CD8-positive, alpha-beta T cell (primary cell): ENCODE measurements at regions of chr6 and their contacts with region 1.

Region 1: DNA sequence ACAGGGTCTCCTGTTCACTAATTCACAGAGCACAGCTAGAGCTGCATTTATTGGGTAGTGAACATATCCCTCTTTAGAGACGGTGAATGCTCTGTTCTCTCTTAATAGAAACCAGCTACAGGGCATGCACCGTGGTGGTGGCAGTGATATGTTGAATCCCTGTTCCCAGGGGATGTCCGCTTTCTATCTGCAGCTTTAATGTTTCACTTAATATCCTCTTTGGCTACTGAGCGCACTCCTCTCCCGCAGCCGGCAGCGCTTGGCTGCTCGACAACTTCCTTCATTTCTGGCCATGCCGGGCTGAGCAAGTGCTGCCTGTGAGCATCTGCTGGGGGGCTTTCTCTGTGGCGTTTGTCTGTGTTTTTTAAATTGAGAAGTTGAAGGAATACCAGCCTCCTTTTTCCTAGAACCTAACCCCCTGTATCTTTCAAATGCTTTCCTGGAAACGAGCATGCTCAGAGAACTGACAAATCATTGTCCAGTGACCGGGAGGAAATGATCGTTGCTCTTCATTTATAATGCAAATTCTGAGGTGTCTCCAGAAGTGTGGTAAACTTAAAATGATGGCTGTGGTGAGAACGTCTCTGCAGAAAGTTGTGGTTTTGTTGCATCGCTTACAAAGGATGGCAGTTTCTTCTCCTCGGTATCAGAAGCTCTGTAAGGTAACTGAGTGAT is 297.9 kb downstream of the UTRN start:
- DNase-seq: peak in 8 of 9 experiments; percentile 7 to 76 (median 32)
- ATAC-seq: peak; percentile 86
- H3K4me3 ChIP-seq: peak overlapping the region; percentile 31 to 42
- H3K4me3 Mint-ChIP-seq: peak overlapping the region; percentile 86
- H3K27ac ChIP-seq: peak overlapping the region; percentile 14 to 47
- H3K27ac Mint-ChIP-seq: peak overlapping the region; percentile 90
- H3K4me1 ChIP-seq: peaks cover 21% of the 10 kb centered on the region
- H3K4me1 Mint-ChIP-seq: peaks cover 35% of the 10 kb centered on the region
- H3K27me3 ChIP-seq: no peaks in the 10 kb centered on the region
- H3K27me3 Mint-ChIP-seq: no peaks in the 10 kb centered on the region
- CTCF ChIP-seq: no peak

Region 2: DNA sequence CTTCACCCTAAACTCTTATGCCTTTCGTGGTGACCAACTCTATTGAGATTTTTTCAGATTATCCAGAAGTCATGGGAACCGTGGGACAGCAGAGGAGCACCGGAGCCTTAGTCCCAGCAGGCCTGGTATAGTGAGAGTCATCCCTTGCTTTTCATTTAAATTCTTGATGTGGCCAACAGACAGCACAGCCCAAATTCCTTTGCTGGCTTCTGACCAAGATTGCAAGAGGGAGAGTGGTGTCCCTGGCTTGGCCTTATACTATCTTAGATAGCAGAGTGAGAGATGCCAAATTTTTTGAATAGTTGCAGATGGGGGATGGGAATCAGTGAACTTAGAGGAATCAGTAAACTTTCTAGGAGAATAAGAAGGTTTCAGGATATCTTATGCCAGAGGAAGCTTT is 424.9 kb before region 1 on chr6:
- CTCF ChIA-PET with region 1: no interaction called
- POLR2A ChIA-PET with region 1: no interaction called
- intact Hi-C with region 1: no loop called
- DNase-seq: no peak
- ATAC-seq: no peak
- H3K4me3 ChIP-seq: no peak overlapping the region
- H3K4me3 Mint-ChIP-seq: no peak overlapping the region
- H3K27ac ChIP-seq: no peak overlapping the region
- H3K27ac Mint-ChIP-seq: no peak overlapping the region
- H3K4me1 ChIP-seq: no peaks in the 10 kb centered on the region
- H3K4me1 Mint-ChIP-seq: peaks cover 5% of the 10 kb centered on the region
- H3K27me3 ChIP-seq: no peaks in the 10 kb centered on the region
- H3K27me3 Mint-ChIP-seq: no peaks in the 10 kb centered on the region
- CTCF ChIP-seq: no peak

Region 3: DNA sequence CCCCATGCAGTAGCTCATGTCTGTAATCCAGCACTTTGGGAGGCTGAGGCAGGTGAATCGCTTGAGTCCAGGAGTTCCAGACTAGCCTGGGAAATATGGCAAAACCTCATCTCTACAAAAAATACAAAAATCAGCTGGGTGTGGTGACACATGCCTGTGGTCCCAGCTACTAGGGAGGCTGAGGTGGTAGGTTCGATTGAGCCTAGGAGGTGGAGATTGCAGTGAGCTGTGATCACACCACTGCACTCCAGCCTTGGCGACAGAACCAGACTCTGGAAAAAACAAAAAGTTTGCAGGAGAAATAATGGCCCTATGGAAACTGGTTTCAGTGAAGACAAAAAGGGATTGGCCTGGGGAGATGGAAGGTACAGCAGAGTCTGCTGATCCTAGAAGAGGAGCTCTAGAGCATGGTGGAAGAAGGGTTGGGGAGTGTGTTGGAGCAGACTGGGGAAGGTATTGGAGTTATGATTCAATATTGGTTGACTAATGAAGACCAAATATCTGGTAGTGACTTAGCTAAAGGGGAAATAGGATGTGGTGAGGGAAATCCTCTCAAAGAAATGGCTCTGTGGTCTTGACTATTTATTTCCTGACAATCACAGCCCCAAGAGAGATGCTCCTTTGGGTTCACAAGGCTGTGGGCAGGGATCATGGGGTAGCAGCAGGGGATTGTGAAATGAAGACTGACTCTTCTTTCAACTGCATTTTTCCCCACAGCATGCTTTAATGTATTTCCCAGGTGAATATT is 16.0 kb before region 1 on chr6:
- CTCF ChIA-PET with region 1: interaction called, 3 read pairs
- POLR2A ChIA-PET with region 1: interaction called, 3 read pairs
- intact Hi-C with region 1: loop called in 1 of 2 experiments (anchors 2 kb)
- DNase-seq: peak in 2 of 9 experiments; percentile 14 to 39
- ATAC-seq: no peak
- H3K4me3 ChIP-seq: no peak overlapping the region
- H3K4me3 Mint-ChIP-seq: no peak overlapping the region
- H3K27ac ChIP-seq: no peak overlapping the region
- H3K27ac Mint-ChIP-seq: no peak overlapping the region
- H3K4me1 ChIP-seq: peaks cover 12% of the 10 kb centered on the region
- H3K4me1 Mint-ChIP-seq: no peaks in the 10 kb centered on the region
- H3K27me3 ChIP-seq: no peaks in the 10 kb centered on the region
- H3K27me3 Mint-ChIP-seq: no peaks in the 10 kb centered on the region
- CTCF ChIP-seq: no peak

Region 4: GRCh38 chr6:144778773-144779492 is 195.9 kb after region 1 on chr6:
- CTCF ChIA-PET with region 1: interaction called, 4 read pairs
- POLR2A ChIA-PET with region 1: no interaction called
- intact Hi-C with region 1: loop called in 1 of 2 experiments (anchors 10 kb)
- DNase-seq: no peak
- ATAC-seq: no peak
- H3K4me3 ChIP-seq: no peak overlapping the region
- H3K4me3 Mint-ChIP-seq: no peak overlapping the region
- H3K27ac ChIP-seq: no peak overlapping the region
- H3K27ac Mint-ChIP-seq: no peak overlapping the region
- H3K4me1 ChIP-seq: no peaks in the 10 kb centered on the region
- H3K4me1 Mint-ChIP-seq: peaks cover 4% of the 10 kb centered on the region
- H3K27me3 ChIP-seq: no peaks in the 10 kb centered on the region
- H3K27me3 Mint-ChIP-seq: no peaks in the 10 kb centered on the region
- CTCF ChIP-seq: no peak

Region 5: DNA sequence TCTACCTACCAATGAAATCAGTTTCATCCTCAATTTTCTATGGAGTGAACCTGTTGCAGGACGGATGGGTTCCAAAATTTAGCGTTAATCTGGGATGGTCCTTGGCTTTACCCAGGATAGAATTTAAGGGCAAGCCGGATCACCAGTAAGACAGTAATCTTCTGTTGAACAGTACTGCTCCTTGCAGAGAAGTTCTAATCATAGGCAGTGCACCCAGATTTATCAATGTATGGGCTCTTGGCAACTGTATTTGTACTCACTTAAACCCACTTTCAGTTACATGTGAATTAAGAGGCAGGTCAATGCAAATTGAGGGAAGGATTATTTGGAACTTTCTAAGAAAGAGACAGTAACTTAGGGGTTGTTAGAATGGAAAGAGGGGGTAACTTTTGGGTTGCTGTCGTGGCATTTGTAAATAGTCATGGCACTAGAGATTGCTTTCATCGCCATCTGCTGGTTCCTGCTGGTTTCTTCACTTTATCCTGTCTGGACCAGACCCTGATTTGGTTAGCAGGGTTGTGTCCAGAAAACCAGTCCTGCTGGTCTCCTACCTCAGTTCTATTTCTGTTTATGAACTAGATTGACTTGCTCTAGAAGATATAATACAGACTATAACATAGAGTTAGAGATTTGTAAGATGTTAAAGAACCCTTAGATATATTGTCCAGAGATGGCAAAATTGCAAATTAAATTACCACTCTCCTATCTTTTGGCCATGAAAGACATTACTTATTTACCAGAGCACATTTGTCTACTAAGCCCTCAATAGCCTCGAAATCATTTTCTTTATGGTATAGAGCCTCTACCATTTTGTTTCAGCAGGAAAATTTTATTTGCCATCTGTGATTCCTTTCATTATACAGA is 348.3 kb after region 1 on chr6:
- CTCF ChIA-PET with region 1: interaction called, 3 read pairs
- POLR2A ChIA-PET with region 1: no interaction called
- intact Hi-C with region 1: loop called (anchors 1 to 2 kb)
- DNase-seq: peak in 4 of 9 experiments; percentile 16 to 49 (median 28)
- ATAC-seq: no peak
- H3K4me3 ChIP-seq: no peak overlapping the region
- H3K4me3 Mint-ChIP-seq: no peak overlapping the region
- H3K27ac ChIP-seq: no peak overlapping the region
- H3K27ac Mint-ChIP-seq: no peak overlapping the region
- H3K4me1 ChIP-seq: no peaks in the 10 kb centered on the region
- H3K4me1 Mint-ChIP-seq: no peaks in the 10 kb centered on the region
- H3K27me3 ChIP-seq: no peaks in the 10 kb centered on the region
- H3K27me3 Mint-ChIP-seq: no peaks in the 10 kb centered on the region
- CTCF ChIP-seq: peak; percentile 57

Region 6: GRCh38 chr6:145214570-145214969 is 631.5 kb after region 1 on chr6:
- CTCF ChIA-PET with region 1: no interaction called
- POLR2A ChIA-PET with region 1: no interaction called
- intact Hi-C with region 1: loop called (anchors 2 to 5 kb)
- DNase-seq: peak in 2 of 9 experiments; percentile 17 to 38
- ATAC-seq: no peak
- H3K4me3 ChIP-seq: no peak overlapping the region
- H3K4me3 Mint-ChIP-seq: no peak overlapping the region
- H3K27ac ChIP-seq: no peak overlapping the region
- H3K27ac Mint-ChIP-seq: no peak overlapping the region
- H3K4me1 ChIP-seq: no peaks in the 10 kb centered on the region
- H3K4me1 Mint-ChIP-seq: peaks cover 3% of the 10 kb centered on the region
- H3K27me3 ChIP-seq: no peaks in the 10 kb centered on the region
- H3K27me3 Mint-ChIP-seq: peaks cover 9% of the 10 kb centered on the region
- CTCF ChIP-seq: peak; percentile 56

Region 7: GRCh38 chr6:145705561-145705960 is 1122.5 kb after region 1 on chr6:
- CTCF ChIA-PET with region 1: no interaction called
- POLR2A ChIA-PET with region 1: no interaction called
- intact Hi-C with region 1: loop called in 1 of 2 experiments (anchors 5 kb)
- DNase-seq: no peak
- ATAC-seq: no peak
- H3K4me3 ChIP-seq: no peak overlapping the region
- H3K4me3 Mint-ChIP-seq: no peak overlapping the region
- H3K27ac ChIP-seq: no peak overlapping the region
- H3K27ac Mint-ChIP-seq: no peak overlapping the region
- H3K4me1 ChIP-seq: no peaks in the 10 kb centered on the region
- H3K4me1 Mint-ChIP-seq: peaks cover 6% of the 10 kb centered on the region
- H3K27me3 ChIP-seq: no peaks in the 10 kb centered on the region
- H3K27me3 Mint-ChIP-seq: no peaks in the 10 kb centered on the region
- CTCF ChIP-seq: no peak